ENCODE measurements at regions of chr6 and their contacts with region 1.

Region 1: DNA sequence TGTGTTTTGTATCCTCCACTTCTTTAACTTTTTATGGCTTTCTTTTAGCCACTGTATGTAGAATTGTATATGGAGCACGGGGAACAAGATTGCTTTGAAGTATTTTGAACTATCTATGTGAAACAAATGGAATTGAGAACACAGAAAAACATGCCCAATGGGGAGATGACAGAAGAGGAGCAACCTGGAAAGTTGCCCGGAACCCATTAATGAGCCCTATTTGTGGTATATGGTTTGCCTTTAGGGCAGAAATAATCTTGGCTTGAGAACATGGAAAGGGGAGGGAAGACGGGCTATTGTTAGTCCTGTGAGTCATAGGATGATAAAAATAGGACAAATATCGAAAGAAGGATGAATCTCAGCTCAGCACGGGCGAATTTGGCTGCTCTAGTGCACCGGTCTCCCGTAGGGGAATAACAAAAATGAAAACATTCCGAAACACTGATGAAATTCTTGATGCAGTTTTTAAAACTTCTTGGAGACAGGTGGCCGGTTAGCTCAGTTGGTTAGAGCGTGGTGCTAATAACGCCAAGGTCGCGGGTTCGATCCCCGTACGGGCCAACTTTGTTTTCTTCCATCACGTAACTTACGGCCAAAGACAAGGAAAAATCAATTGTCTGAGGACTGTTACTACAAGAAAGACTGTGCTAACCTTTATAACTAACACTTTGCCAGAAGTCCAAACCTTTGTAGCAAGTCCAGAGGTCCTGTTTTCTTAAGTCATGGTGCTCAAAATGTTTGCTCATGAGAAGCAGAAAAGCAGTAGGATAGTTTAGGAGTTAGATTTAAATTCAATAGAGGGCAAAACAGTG is 15.7 kb downstream of the HMGN4 start:
- DNase-seq: peak; percentile 82
- H3K4me3 ChIP-seq: peak overlapping the region; percentile 22 to 55 (median 38)
- H3K27ac ChIP-seq: peak overlapping the region; percentile 72 to 84 (median 76)
- H3K4me1 ChIP-seq: peaks cover 0 to 36% (median 14%) of the 10 kb centered on the region in 4 donors
- H3K27me3 ChIP-seq: no peaks in the 10 kb centered on the region
- CTCF ChIP-seq: no peak
- EP300 ChIP-seq: no peak
- POLR2A ChIP-seq: no peak

Region 2: GRCh38 chr6:26524722-26525370 is 29.0 kb before region 1 on chr6:
- in situ Hi-C with region 1: no loop called
- intact Hi-C with region 1: loop called (anchors 1 kb)
- DNase-seq: no peak
- H3K4me3 ChIP-seq: no peak overlapping the region
- H3K27ac ChIP-seq: no peak overlapping the region
- H3K4me1 ChIP-seq: peaks cover 0 to 16% (median 5%) of the 10 kb centered on the region in 4 donors
- H3K27me3 ChIP-seq: no peaks in the 10 kb centered on the region
- CTCF ChIP-seq: no peak
- EP300 ChIP-seq: no peak
- POLR2A ChIP-seq: no peak

Measured in transverse colon (tissue), 4 donors.